CD8-positive, alpha-beta T cell (primary cell): ENCODE measurements at regions of chr7 and their contacts with region 1.

Region 1: GRCh38 chr7:86158111-86158510 is 485.6 kb upstream of the GRM3 start:
- DNase-seq: no peak
- ATAC-seq: no peak
- H3K4me3 ChIP-seq: no peak overlapping the region
- H3K4me3 Mint-ChIP-seq: no peak overlapping the region
- H3K27ac ChIP-seq: no peak overlapping the region
- H3K27ac Mint-ChIP-seq: no peak overlapping the region
- H3K4me1 ChIP-seq: no peaks in the 10 kb centered on the region
- H3K4me1 Mint-ChIP-seq: no peaks in the 10 kb centered on the region
- H3K27me3 ChIP-seq: no peaks in the 10 kb centered on the region
- H3K27me3 Mint-ChIP-seq: no peaks in the 10 kb centered on the region
- CTCF ChIP-seq: no peak

Region 2: DNA sequence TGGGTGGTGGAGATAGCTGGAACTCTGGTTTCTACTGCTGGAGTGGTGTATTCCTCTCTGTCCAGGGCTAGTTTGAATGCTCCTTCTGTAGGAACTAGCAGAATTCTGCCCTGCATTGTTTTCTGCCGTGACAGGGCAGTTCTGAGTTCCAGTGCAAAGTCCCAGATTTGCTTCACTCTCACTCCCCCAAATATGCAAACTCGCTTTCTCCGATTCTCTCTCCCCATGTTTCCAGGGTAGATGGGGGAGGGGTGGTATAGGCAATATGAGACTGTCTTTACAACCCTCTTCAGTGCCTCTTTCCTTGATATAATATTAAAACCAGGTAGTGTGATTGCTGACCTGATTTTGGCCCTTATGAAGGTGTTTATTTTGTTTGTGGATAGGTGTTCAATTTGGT is 207.7 kb before region 1 on chr7:
- CTCF ChIA-PET with region 1: no interaction called
- POLR2A ChIA-PET with region 1: no interaction called
- intact Hi-C with region 1: no loop called
- DNase-seq: no peak
- ATAC-seq: no peak
- H3K4me3 ChIP-seq: no peak overlapping the region
- H3K4me3 Mint-ChIP-seq: no peak overlapping the region
- H3K27ac ChIP-seq: no peak overlapping the region
- H3K27ac Mint-ChIP-seq: no peak overlapping the region
- H3K4me1 ChIP-seq: no peaks in the 10 kb centered on the region
- H3K4me1 Mint-ChIP-seq: no peaks in the 10 kb centered on the region
- H3K27me3 ChIP-seq: no peaks in the 10 kb centered on the region
- H3K27me3 Mint-ChIP-seq: no peaks in the 10 kb centered on the region
- CTCF ChIP-seq: no peak

Region 3: DNA sequence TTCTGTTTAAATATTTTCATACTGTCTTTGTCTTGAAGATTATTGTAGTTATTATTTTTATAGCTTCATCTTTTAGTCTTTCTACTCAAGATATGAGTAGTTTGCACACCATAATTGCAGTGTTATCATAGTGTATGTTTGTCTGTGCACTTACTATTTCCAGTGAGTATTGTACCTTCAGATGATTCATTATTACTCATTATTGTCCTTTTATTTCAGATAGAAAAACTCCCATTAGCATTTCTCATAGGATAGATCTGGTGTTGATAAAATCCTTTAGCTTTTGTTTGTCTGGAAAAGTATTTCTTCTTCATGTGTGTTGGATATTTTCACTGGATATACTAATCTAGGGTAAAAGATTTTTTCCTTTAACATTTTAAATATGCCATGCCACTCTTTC is 160.6 kb before region 1 on chr7:
- CTCF ChIA-PET with region 1: no interaction called
- POLR2A ChIA-PET with region 1: no interaction called
- intact Hi-C with region 1: no loop called
- DNase-seq: no peak
- ATAC-seq: no peak
- H3K4me3 ChIP-seq: no peak overlapping the region
- H3K4me3 Mint-ChIP-seq: no peak overlapping the region
- H3K27ac ChIP-seq: no peak overlapping the region
- H3K27ac Mint-ChIP-seq: no peak overlapping the region
- H3K4me1 ChIP-seq: no peaks in the 10 kb centered on the region
- H3K4me1 Mint-ChIP-seq: no peaks in the 10 kb centered on the region
- H3K27me3 ChIP-seq: no peaks in the 10 kb centered on the region
- H3K27me3 Mint-ChIP-seq: no peaks in the 10 kb centered on the region
- CTCF ChIP-seq: no peak

Region 4: DNA sequence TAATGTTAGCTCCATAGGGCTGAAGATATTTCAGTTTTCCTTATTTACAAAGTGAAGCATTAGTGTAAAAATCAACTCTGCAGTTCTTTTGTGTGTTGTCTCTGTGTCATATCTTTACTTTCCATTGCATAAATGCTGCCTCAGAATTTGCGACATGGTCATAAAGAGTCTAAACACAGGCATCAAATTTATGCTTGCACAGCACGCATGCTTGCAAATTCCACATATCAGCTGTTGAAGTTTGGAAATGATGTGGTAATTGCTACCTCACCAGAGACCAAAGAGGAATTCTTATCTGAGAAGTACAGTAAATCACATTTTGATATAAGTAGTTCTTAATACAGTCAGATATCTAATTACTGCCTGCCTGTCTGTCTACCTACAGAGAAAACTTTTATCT is 137.4 kb after region 1 on chr7:
- CTCF ChIA-PET with region 1: no interaction called
- POLR2A ChIA-PET with region 1: no interaction called
- intact Hi-C with region 1: no loop called
- DNase-seq: no peak
- ATAC-seq: no peak
- H3K4me3 ChIP-seq: no peak overlapping the region
- H3K4me3 Mint-ChIP-seq: no peak overlapping the region
- H3K27ac ChIP-seq: no peak overlapping the region
- H3K27ac Mint-ChIP-seq: no peak overlapping the region
- H3K4me1 ChIP-seq: no peaks in the 10 kb centered on the region
- H3K4me1 Mint-ChIP-seq: no peaks in the 10 kb centered on the region
- H3K27me3 ChIP-seq: no peaks in the 10 kb centered on the region
- H3K27me3 Mint-ChIP-seq: no peaks in the 10 kb centered on the region
- CTCF ChIP-seq: no peak

Region 5: GRCh38 chr7:87480006-87480785 is 1322.1 kb after region 1 on chr7:
- CTCF ChIA-PET with region 1: no interaction called
- POLR2A ChIA-PET with region 1: no interaction called
- intact Hi-C with region 1: loop called in 1 of 2 experiments (anchors 10 kb)
- DNase-seq: no peak
- ATAC-seq: no peak
- H3K4me3 ChIP-seq: no peak overlapping the region
- H3K4me3 Mint-ChIP-seq: no peak overlapping the region
- H3K27ac ChIP-seq: no peak overlapping the region
- H3K27ac Mint-ChIP-seq: no peak overlapping the region
- H3K4me1 ChIP-seq: peaks cover 5% of the 10 kb centered on the region
- H3K4me1 Mint-ChIP-seq: peaks cover 6% of the 10 kb centered on the region
- H3K27me3 ChIP-seq: peaks cover 0 to 5% of the 10 kb centered on the region in 2 experiments
- H3K27me3 Mint-ChIP-seq: peaks cover 28% of the 10 kb centered on the region
- CTCF ChIP-seq: no peak